ENCODE measurements at regions of chr9 and their contacts with region 1.

Region 1: GRCh38 chr9:90914868-90915483 is 113.4 kb downstream of the SYK start:
- DNase-seq: peak; percentile 86
- H3K4me3 ChIP-seq: no peak overlapping the region
- H3K27ac ChIP-seq: no peak overlapping the region
- H3K4me1 ChIP-seq: peaks cover 27% of the 10 kb centered on the region
- CTCF ChIP-seq: peak; percentile 93

Region 2: GRCh38 chr9:90985631-90986030 is 70.7 kb after region 1 on chr9:
- CTCF ChIA-PET with region 1: no interaction called
- POLR2A ChIA-PET with region 1: no interaction called
- intact Hi-C with region 1: loop called (anchors 2 kb)
- DNase-seq: no peak
- H3K4me3 ChIP-seq: no peak overlapping the region
- H3K27ac ChIP-seq: no peak overlapping the region
- H3K4me1 ChIP-seq: no peaks in the 10 kb centered on the region
- CTCF ChIP-seq: no peak; the same call in 1 of the 2 replicates

Region 3: GRCh38 chr9:91089405-91090129 is 174.6 kb after region 1 on chr9:
- CTCF ChIA-PET with region 1: no interaction called
- POLR2A ChIA-PET with region 1: no interaction called
- intact Hi-C with region 1: loop called (anchors 10 kb)
- DNase-seq: peak; percentile 61
- H3K4me3 ChIP-seq: no peak overlapping the region
- H3K27ac ChIP-seq: no peak overlapping the region
- H3K4me1 ChIP-seq: no peaks in the 10 kb centered on the region
- CTCF ChIP-seq: peak; percentile 75

Region 4: GRCh38 chr9:91422758-91423711 is 508.1 kb after region 1 on chr9:
- CTCF ChIA-PET with region 1: interaction called, 5 read pairs
- POLR2A ChIA-PET with region 1: interaction called, 3 read pairs
- intact Hi-C with region 1: loop called (anchors 1 kb)
- DNase-seq: peak; percentile 76
- H3K4me3 ChIP-seq: peak overlapping the region; percentile 85
- H3K27ac ChIP-seq: no peak overlapping the region
- H3K4me1 ChIP-seq: peaks cover 22% of the 10 kb centered on the region
- CTCF ChIP-seq: peak; percentile 49

Region 5: GRCh38 chr9:91727316-91727861 is 812.4 kb after region 1 on chr9:
- CTCF ChIA-PET with region 1: interaction called, 4 read pairs
- POLR2A ChIA-PET with region 1: no interaction called
- intact Hi-C with region 1: loop called (anchors 2 kb)
- DNase-seq: peak; percentile 61
- H3K4me3 ChIP-seq: no peak overlapping the region
- H3K27ac ChIP-seq: no peak overlapping the region
- H3K4me1 ChIP-seq: peaks cover under 1% of the 10 kb centered on the region
- CTCF ChIP-seq: peak; percentile 86